ENCODE measurements at regions of chr11 and their contacts with region 1.

Region 1: DNA sequence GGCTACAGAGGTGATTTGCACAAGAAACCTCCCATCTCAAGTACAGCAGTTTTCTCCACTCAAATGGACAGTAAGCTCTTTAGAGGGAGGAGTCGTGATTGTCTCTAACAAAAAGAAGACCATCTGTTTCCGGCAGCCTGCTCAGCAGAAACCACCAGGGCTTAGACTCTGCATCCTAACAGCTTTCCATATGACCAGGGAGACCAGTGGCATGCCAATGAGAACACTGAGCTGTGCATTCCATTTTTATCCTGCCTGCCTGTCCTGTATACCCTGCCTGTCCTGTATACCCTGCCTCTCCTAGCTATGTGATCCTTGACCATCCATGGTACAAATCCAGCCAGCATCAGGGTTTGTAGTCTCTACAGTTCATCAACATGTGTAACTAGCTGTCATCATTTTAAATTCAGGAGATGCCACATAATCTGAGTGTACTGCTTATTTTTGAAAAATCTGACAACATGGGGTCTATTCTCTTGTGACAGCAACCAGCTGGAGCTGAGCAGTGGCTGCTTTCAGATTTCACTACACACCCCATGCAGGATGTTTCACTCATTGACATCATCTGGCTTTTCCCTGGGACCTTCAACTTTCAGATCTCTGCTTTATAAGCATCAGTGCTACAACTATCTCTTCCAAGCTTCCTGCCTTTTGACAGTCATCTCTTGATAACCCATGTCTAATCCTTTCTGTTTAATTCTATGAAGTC is 50.5 kb upstream of the POU2AF2 start:
- DNase-seq: no peak
- ATAC-seq: no peak
- H3K4me3 ChIP-seq: no peak overlapping the region
- H3K4me3 Mint-ChIP-seq: no peak overlapping the region
- H3K27ac ChIP-seq: no peak overlapping the region
- H3K27ac Mint-ChIP-seq: no peak overlapping the region
- H3K4me1 ChIP-seq: no peaks in the 10 kb centered on the region
- H3K4me1 Mint-ChIP-seq: no peaks in the 10 kb centered on the region
- H3K27me3 ChIP-seq: no peaks in the 10 kb centered on the region
- H3K27me3 Mint-ChIP-seq: peaks cover 2% of the 10 kb centered on the region
- CTCF ChIP-seq: no peak

Region 2: GRCh38 chr11:109914809-109915653 is 1280.0 kb before region 1 on chr11:
- CTCF ChIA-PET with region 1: no interaction called
- POLR2A ChIA-PET with region 1: no interaction called
- intact Hi-C with region 1: loop called in 1 of 2 experiments (anchors 5 kb)
- DNase-seq: no peak
- ATAC-seq: no peak
- H3K4me3 ChIP-seq: no peak overlapping the region
- H3K4me3 Mint-ChIP-seq: no peak overlapping the region
- H3K27ac ChIP-seq: no peak overlapping the region
- H3K27ac Mint-ChIP-seq: no peak overlapping the region
- H3K4me1 ChIP-seq: no peaks in the 10 kb centered on the region
- H3K4me1 Mint-ChIP-seq: no peaks in the 10 kb centered on the region
- H3K27me3 ChIP-seq: no peaks in the 10 kb centered on the region
- H3K27me3 Mint-ChIP-seq: no peaks in the 10 kb centered on the region
- CTCF ChIP-seq: no peak

Region 3: GRCh38 chr11:111162305-111162704 is 32.7 kb before region 1 on chr11:
- CTCF ChIA-PET with region 1: no interaction called
- POLR2A ChIA-PET with region 1: no interaction called
- intact Hi-C with region 1: no loop called
- DNase-seq: no peak
- ATAC-seq: no peak
- H3K4me3 ChIP-seq: no peak overlapping the region
- H3K4me3 Mint-ChIP-seq: no peak overlapping the region
- H3K27ac ChIP-seq: no peak overlapping the region
- H3K27ac Mint-ChIP-seq: no peak overlapping the region
- H3K4me1 ChIP-seq: no peaks in the 10 kb centered on the region
- H3K4me1 Mint-ChIP-seq: no peaks in the 10 kb centered on the region
- H3K27me3 ChIP-seq: no peaks in the 10 kb centered on the region
- H3K27me3 Mint-ChIP-seq: peaks cover 16% of the 10 kb centered on the region
- CTCF ChIP-seq: no peak